HEK293 (cell line): ENCODE measurements at regions of chr12 and their contacts with region 1.

Region 1: DNA sequence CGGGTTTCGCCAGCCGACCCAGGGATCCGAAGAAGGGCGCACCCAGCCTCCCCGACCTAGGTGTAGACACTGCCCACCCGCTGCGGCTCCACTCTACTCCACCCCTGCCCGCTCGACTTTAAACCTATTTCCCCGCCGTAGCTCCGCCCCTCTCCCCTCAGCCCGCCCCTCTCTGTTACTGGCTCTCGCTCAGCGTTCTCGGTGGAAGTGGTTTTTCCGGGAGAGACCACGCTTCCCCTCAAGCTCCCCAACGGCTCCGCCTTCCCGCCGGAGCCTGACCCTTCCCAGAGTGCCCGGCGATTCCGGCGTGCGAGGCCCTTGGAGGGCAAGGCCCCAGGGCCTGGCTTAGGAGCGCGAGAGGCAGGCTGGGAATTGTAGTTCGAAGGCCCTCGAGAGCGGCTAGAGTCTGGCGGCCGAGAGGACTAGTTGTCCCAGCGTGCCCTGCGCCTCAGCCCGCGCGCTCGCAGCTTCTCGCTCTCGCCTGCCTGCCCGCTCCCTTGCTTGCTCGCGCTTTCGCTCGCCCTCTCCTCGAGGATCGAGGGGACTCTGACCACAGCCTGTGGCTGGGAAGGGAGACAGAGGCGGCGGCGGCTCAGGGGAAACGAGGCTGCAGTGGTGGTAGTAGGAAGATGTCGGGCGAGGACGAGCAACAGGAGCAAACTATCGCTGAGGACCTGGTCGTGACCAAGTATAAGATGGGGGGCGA is at the start of gene PA2G4:
- H3K4me3 ChIP-seq: peak within 1 kb of the TSS; percentile 82
- H3K27ac ChIP-seq: peak within 1 kb of the TSS; percentile 90
- H3K4me1 ChIP-seq: 0 out of 2 replicates have a peak, but pooled peaks cover 2% of the 10 kb centered on the region
- CTCF ChIP-seq: no peak; the same call in 1 of the 2 replicates

Region 2: GRCh38 chr12:56007564-56008559 is 96.4 kb before region 1 on chr12:
- CTCF ChIA-PET with region 1: no interaction called
- POLR2A ChIA-PET with region 1: interaction called, 11 read pairs
- H3K4me3 ChIP-seq: peak overlapping the region; percentile 51
- H3K27ac ChIP-seq: peak overlapping the region; percentile 70
- H3K4me1 ChIP-seq: no peaks in the 10 kb centered on the region; the same call in 1 of the 2 replicates
- CTCF ChIP-seq: no peak

Region 3: DNA sequence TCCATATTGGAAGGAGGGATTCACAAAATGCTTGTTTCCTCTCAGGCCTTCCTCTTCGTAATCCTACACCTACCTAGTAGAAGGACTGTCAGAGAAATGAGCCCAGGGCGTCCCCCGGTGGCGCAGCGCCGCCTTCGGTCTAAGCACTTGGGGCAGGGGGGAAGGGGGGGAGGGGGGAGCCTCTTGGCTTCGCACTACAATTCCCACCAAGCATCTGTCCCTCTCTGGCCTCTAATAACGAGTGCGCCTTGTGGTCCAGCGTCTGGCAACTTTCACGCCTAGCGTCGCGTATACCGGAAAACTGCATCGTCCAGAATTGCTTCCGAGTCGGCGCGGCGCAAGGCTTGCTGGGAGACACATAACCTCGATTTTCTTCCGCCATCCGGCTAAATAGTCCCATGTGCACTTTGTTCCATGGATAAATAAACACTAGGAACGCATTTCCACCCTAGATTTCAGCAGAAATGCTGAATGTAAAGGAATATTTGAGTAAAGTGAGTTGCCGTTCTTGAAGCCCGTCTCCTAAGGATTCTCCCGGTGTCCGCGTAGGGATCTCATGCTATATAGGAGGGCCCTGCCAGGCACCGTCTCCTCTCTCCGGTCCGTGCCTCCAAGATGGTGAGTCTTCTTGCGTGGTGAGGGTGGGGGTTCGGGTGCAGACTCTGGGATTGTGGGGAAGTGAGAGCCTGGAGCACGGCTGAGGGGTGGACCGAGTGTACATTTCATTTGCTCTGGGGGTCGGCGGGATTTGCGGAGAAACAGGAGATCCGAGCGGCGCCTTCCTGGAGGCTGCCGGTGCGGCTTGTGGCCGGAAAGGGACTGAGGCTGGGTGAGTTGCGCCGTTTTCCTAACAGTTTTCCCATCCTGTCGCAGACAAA is 62.5 kb before region 1 on chr12 and contains the start of gene RPS26:
- CTCF ChIA-PET with region 1: interaction called, 8 read pairs
- POLR2A ChIA-PET with region 1: interaction called, 36 read pairs
- H3K4me3 ChIP-seq: peak within 1 kb of the TSS; percentile 75
- H3K27ac ChIP-seq: peak within 1 kb of the TSS; percentile 93
- H3K4me1 ChIP-seq: peaks cover 19% of the 10 kb centered on the region
- CTCF ChIP-seq: peak; percentile 57

Region 4: GRCh38 chr12:56078990-56079664 is 25.1 kb before region 1 on chr12:
- CTCF ChIA-PET with region 1: interaction called, 26 read pairs
- POLR2A ChIA-PET with region 1: interaction called, 54 read pairs
- H3K4me3 ChIP-seq: peak overlapping the region; percentile 40
- H3K27ac ChIP-seq: peak overlapping the region; percentile 64; the same call in 1 of the 2 replicates
- H3K4me1 ChIP-seq: no peaks in the 10 kb centered on the region; the same call in 1 of the 2 replicates
- CTCF ChIP-seq: peak; percentile 92

Region 5: DNA sequence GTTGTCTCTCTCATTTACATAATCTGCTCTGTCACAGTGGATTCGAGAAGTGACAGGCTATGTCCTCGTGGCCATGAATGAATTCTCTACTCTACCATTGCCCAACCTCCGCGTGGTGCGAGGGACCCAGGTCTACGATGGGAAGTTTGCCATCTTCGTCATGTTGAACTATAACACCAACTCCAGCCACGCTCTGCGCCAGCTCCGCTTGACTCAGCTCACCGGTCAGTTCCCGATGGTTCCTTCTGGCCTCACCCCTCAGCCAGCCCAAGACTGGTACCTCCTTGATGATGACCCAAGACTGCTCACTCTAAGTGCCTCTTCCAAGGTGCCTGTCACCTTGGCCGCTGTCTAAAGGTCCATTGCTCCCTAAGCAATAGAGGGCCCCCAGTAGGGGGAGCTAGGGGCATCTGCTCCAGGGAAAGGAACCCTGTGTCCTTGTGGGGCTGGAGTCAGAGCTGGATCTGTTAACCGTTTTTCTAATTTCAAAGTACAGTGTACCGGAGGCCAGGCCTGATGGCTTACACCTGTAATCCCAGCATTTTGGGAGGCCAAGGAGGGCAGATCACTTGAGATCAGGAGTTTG is 19.2 kb before region 1 on chr12:
- CTCF ChIA-PET with region 1: interaction called, 26 read pairs
- POLR2A ChIA-PET with region 1: interaction called, 54 read pairs
- H3K4me3 ChIP-seq: no peak overlapping the region
- H3K27ac ChIP-seq: no peak overlapping the region
- H3K4me1 ChIP-seq: no peaks in the 10 kb centered on the region; the same call in 1 of the 2 replicates
- CTCF ChIP-seq: 0 out of 2 replicates have a peak, but pooled peaks have one; percentile 10

Region 6: DNA sequence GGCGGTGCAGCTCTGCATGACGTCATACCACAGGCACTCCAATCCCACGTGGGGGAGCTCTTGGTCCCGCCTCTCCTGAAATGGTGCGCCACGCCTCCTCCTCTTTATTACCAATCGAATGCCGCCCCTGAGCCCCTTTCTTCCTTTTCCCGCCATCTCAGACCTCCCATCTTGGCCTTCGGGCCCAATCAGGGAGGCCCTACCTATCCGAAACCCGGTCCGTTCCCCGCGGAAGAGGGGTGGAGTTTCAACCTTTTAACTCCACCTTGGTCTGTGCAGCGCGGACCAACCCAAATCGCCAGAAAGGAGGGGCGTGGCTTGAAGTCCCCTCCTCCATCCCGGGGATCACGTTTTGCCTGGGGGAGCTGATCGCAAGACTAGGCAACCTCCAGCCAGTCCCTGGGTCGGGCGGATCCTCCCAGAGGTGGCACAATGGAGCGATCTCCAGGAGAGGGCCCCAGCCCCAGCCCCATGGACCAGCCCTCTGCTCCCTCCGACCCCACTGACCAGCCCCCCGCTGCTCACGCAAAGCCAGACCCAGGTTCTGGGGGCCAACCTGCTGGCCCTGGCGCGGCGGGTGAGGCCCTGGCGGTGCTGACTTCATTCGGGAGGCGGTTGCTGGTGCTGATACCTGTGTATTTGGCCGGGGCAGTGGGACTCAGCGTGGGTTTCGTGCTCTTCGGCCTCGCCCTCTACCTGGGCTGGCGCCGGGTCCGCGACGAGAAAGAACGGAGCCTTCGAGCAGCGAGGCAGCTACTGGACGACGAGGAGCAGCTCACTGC is 23.8 kb after region 1 on chr12 and contains the start of gene ESYT1:
- CTCF ChIA-PET with region 1: interaction called, 3 read pairs
- POLR2A ChIA-PET with region 1: interaction called, 29 read pairs
- H3K4me3 ChIP-seq: peak within 1 kb of the TSS; percentile 80
- H3K27ac ChIP-seq: peak within 1 kb of the TSS; percentile 57
- H3K4me1 ChIP-seq: peaks cover 9% of the 10 kb centered on the region
- CTCF ChIP-seq: peak; percentile 67; the same call in 1 of the 2 replicates